ENCODE measurements at regions of chr7 and their contacts with region 1.

Region 1: DNA sequence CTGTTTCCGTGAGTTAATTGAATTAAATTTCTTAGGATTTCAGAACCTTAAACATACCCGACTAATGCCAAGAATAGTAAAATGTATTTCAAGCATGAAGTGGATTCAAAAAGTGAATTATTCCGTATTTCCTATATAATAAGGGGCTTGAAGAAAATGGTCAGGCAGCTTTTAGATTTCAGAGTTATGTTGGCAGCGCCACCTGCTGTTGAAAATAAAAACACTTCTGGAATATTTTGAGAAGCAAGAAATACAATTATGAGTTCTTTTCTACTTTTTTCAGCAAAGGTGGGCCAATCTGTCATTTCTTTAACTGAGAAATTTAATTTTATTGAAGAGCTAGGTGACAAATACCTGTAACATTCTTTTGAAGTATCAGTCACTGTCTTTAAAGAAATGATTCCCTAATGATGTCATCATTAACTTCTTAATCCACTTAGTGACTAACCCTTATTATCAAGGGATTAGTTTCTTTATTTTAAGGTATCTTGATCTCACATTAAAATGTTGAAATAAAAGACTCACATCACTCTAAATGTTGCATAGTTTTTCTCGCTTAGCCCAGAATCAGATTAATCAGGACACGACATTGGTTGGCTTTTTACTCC is 36.6 kb upstream of the AGR3 start:
- DNase-seq: peak; percentile 70
- ATAC-seq: no peak
- H3K4me3 ChIP-seq: peak overlapping the region; percentile 49; the same call in 1 of the 2 replicates
- H3K27ac ChIP-seq: peak overlapping the region; percentile 92
- H3K4me1 ChIP-seq: peaks cover 74% of the 10 kb centered on the region
- H3K27me3 ChIP-seq: no peaks in the 10 kb centered on the region
- CTCF ChIP-seq: peak; percentile 85

Region 2: GRCh38 chr7:16695621-16696237 is 222.7 kb before region 1 on chr7:
- CTCF ChIA-PET with region 1: no interaction called
- POLR2A ChIA-PET with region 1: no interaction called
- intact Hi-C with region 1: loop called (anchors 2 kb)
- DNase-seq: peak; percentile 80
- ATAC-seq: peak; percentile 69
- H3K4me3 ChIP-seq: no peak overlapping the region
- H3K27ac ChIP-seq: no peak overlapping the region
- H3K4me1 ChIP-seq: peaks cover 32% of the 10 kb centered on the region
- H3K27me3 ChIP-seq: no peaks in the 10 kb centered on the region
- CTCF ChIP-seq: peak; percentile 74

Region 3: DNA sequence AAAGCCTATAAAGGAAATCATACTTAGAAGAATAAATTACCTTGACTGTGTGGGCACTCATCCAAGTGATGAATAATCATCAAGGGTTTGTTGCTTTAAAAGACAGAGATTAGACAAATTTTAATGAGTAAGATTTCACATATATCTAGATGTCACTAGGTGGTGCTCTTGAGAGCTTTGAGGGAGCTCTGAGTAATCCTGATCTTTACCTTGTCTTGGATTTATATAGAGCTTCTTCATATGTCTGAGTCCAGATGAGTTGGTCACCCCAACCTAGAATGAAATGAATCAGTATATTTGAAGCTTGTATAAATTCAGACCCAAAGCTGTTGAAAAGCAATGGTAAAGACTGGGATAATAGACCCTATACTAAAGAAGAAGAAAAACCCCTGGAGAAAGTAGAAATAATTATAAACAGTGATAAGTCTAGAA is 117.3 kb before region 1 on chr7:
- CTCF ChIA-PET with region 1: interaction called, 6 read pairs
- POLR2A ChIA-PET with region 1: interaction called, 3 read pairs
- intact Hi-C with region 1: loop called (anchors 1 kb)
- DNase-seq: peak; percentile 94
- ATAC-seq: peak; percentile 50
- H3K4me3 ChIP-seq: no peak overlapping the region
- H3K27ac ChIP-seq: peak overlapping the region; percentile 35
- H3K4me1 ChIP-seq: peaks cover 55% of the 10 kb centered on the region
- H3K27me3 ChIP-seq: no peaks in the 10 kb centered on the region
- CTCF ChIP-seq: peak; percentile 78

Region 4: DNA sequence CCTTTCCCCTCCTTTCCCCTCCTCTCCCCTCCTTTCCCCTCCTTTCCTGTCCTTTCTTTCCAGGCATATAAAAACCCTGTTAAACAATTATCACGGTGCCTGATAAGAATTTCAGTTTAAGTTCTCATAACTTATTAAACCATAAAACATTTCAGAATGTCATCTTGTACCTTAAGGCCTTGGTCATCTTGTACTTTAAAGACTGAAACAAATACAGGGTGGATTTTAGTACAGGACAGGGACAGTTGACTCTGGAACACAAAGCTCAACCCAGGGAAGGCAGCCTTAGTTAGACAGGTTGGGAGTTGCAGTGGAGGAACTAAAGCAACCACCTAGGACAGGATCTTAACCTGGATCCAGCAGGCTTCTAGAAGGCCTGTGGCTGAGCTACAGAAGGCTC is 37.8 kb before region 1 on chr7:
- CTCF ChIA-PET with region 1: no interaction called
- POLR2A ChIA-PET with region 1: no interaction called
- intact Hi-C with region 1: no loop called
- DNase-seq: no peak
- ATAC-seq: no peak
- H3K4me3 ChIP-seq: no peak overlapping the region
- H3K27ac ChIP-seq: no peak overlapping the region
- H3K4me1 ChIP-seq: no peaks in the 10 kb centered on the region
- H3K27me3 ChIP-seq: no peaks in the 10 kb centered on the region
- CTCF ChIP-seq: no peak

Region 5: GRCh38 chr7:16891338-16891737 is 27.1 kb before region 1 on chr7:
- CTCF ChIA-PET with region 1: interaction called, 19 read pairs
- POLR2A ChIA-PET with region 1: no interaction called
- intact Hi-C with region 1: loop called (anchors 1 kb)
- DNase-seq: peak; percentile 85
- ATAC-seq: peak; percentile 87
- H3K4me3 ChIP-seq: no peak overlapping the region
- H3K27ac ChIP-seq: peak overlapping the region; percentile 45
- H3K4me1 ChIP-seq: peaks cover 37% of the 10 kb centered on the region
- H3K27me3 ChIP-seq: no peaks in the 10 kb centered on the region
- CTCF ChIP-seq: peak; percentile 88